Activated B cell treated with CpG ODN at 0.5 μM for 24 hours (primary cell): ENCODE measurements at regions of chr14 and their contacts with region 1.

Region 1: GRCh38 chr14:53613404-53614253 is 343.0 kb downstream of the BMP4 start:
- DNase-seq: peak; percentile 59
- ATAC-seq: peak; percentile 93
- H3K4me3 Mint-ChIP-seq: peak overlapping the region; percentile 79
- H3K27ac Mint-ChIP-seq: peak overlapping the region; percentile 100
- H3K4me1 Mint-ChIP-seq: peaks cover 53% of the 10 kb centered on the region
- H3K27me3 Mint-ChIP-seq: no peaks in the 10 kb centered on the region
- CTCF ChIP-seq: no peak

Region 2: GRCh38 chr14:53547593-53547992 is 66.0 kb before region 1 on chr14:
- CTCF ChIA-PET with region 1: no interaction called
- POLR2A ChIA-PET with region 1: interaction called, 7 read pairs
- intact Hi-C with region 1: loop called (anchors 2 kb)
- DNase-seq: no peak
- ATAC-seq: no peak
- H3K4me3 Mint-ChIP-seq: no peak overlapping the region
- H3K27ac Mint-ChIP-seq: no peak overlapping the region
- H3K4me1 Mint-ChIP-seq: peaks cover 14% of the 10 kb centered on the region
- H3K27me3 Mint-ChIP-seq: peaks cover 3% of the 10 kb centered on the region
- CTCF ChIP-seq: no peak

Region 3: DNA sequence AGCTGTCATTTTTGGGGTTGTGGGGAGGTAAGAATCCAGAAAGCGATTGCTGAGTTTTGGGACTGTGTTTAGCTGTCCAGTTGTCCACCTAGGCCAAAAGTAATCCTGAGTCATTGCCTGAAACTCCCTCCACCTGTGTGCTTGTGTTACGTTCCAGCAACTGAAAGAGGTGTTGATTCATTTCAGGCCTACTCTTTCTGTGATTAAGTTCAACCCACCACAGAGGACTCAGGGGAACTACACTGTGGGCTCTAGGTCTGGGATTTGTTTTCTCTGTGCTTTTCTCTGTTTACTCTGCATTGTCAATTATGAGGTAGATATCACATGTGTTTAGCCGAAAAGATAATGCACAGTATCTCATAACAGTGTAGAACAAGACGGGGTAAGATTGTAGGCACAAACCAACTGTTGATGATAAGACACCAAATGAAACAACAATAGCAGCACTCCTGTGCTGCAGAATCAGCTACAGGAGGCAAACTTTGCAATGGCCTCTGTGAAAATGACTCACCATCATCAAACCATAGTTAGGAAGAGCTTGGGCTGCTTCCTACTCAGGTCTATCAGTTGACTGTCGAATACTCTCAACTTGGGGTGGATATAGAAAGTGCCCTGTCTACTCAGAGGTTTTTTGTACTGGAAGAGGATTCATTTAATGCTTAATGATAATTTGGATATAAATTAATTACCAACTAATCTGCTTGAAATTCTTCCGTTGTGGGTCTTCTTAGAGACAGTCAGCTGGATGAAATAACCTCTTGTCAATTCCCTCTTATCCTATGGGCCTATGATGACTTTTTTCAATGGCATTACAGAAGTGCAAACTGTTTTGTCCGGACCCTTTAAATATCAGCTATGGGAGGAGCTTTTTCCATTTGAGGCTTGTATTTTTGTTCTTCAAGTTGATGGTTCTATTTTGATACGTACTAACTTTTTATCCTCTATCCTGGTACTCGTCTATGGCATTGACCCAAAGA is 42.9 kb before region 1 on chr14:
- CTCF ChIA-PET with region 1: interaction called, 3 read pairs
- POLR2A ChIA-PET with region 1: interaction called, 15 read pairs
- intact Hi-C with region 1: loop called (anchors 1 kb)
- DNase-seq: no peak
- ATAC-seq: peak; percentile 84
- H3K4me3 Mint-ChIP-seq: peak overlapping the region; percentile 8
- H3K27ac Mint-ChIP-seq: peak overlapping the region; percentile 14
- H3K4me1 Mint-ChIP-seq: peaks cover 17% of the 10 kb centered on the region
- H3K27me3 Mint-ChIP-seq: peaks cover 4% of the 10 kb centered on the region
- CTCF ChIP-seq: no peak

Region 4: DNA sequence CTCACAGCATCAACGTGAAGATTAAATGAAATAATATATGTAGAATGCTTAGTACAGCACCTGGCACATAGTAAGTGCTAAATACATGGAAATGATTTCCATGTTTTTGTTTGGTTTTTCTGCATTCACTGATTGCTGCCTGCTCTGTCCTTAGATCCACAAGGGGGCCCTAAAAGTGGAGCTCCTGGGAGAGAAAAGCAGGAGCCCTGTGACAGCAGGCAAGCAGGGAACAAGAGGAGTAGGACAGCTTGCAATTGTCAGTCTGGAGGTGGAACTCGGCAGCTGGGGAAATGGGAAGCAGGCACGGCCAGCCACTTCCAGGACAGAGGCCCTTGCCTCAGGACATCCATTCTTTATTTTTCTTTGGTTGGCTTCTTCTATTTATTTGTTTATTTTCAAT is 50.1 kb after region 1 on chr14:
- CTCF ChIA-PET with region 1: no interaction called
- POLR2A ChIA-PET with region 1: no interaction called
- intact Hi-C with region 1: no loop called
- DNase-seq: no peak
- ATAC-seq: no peak
- H3K4me3 Mint-ChIP-seq: no peak overlapping the region
- H3K27ac Mint-ChIP-seq: no peak overlapping the region
- H3K4me1 Mint-ChIP-seq: no peaks in the 10 kb centered on the region
- H3K27me3 Mint-ChIP-seq: peaks cover 6% of the 10 kb centered on the region
- CTCF ChIP-seq: no peak